ENCODE measurements at regions of chr17 and their contacts with region 1.

Region 1: GRCh38 chr17:76121932-76122430 is 18.4 kb upstream of the EXOC7 start:
- DNase-seq: peak in 3 of 14 experiments; percentile 21 to 49 (median 41)
- ATAC-seq: peak; percentile 12
- H3K4me3 ChIP-seq: peak overlapping the region; percentile 52
- H3K4me3 Mint-ChIP-seq: no peak overlapping the region
- H3K27ac ChIP-seq: no peak overlapping the region
- H3K27ac Mint-ChIP-seq: peak overlapping the region; percentile 42
- H3K4me1 ChIP-seq: peaks cover 31% of the 10 kb centered on the region
- H3K4me1 Mint-ChIP-seq: peaks cover 17% of the 10 kb centered on the region
- H3K27me3 ChIP-seq: no peaks in the 10 kb centered on the region
- H3K27me3 Mint-ChIP-seq: no peaks in the 10 kb centered on the region
- CTCF ChIP-seq: no peak

Region 2: GRCh38 chr17:76111956-76112355 is 10.0 kb before region 1 on chr17:
- CTCF ChIA-PET with region 1: no interaction called
- POLR2A ChIA-PET with region 1: no interaction called
- intact Hi-C with region 1: no loop called
- DNase-seq: no peak
- ATAC-seq: no peak
- H3K4me3 ChIP-seq: no peak overlapping the region
- H3K4me3 Mint-ChIP-seq: no peak overlapping the region
- H3K27ac ChIP-seq: no peak overlapping the region
- H3K27ac Mint-ChIP-seq: no peak overlapping the region
- H3K4me1 ChIP-seq: no peaks in the 10 kb centered on the region
- H3K4me1 Mint-ChIP-seq: no peaks in the 10 kb centered on the region
- H3K27me3 ChIP-seq: no peaks in the 10 kb centered on the region
- H3K27me3 Mint-ChIP-seq: no peaks in the 10 kb centered on the region
- CTCF ChIP-seq: no peak

Region 3: DNA sequence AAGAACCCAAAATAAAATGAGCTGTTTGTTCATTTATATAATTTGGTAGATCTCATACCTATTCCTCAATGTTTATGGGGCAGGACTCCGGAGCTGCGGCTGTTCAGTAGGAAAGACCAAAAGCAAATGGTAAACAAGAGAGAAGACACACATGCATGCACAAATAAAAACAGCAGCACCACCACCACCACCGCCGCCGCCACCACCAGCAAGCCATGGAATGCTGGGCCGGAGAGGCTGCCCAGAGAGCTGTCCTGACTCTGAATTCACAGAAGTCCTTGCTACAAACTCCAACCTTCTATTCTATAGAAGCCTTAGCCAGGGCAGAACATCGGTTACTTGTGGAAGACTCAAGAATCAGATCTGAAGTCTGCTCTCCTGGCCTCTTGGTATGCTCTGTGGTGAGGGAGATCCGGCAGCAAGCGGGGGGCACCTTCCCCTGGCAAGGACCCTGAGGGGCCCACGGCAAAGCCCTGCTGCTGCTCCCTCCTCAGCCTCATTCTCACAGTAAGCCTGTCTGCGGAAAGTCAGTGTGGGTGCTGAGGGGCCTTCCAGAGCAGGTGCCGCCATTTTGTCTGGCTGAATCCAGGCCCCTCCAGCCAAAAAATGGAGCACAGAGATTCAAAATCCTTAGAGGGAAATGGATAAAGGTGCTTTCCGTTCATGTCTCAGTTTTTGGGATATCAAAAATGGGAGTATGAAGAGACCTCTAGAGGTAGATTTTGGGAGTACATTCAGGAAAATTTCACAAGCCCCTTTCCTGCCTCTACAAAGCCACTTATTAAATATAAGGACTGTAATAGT is 25.4 kb after region 1 on chr17:
- CTCF ChIA-PET with region 1: interaction called, 9 read pairs
- POLR2A ChIA-PET with region 1: interaction called, 11 read pairs
- intact Hi-C with region 1: no loop called
- DNase-seq: no peak
- ATAC-seq: no peak
- H3K4me3 ChIP-seq: no peak overlapping the region
- H3K4me3 Mint-ChIP-seq: no peak overlapping the region
- H3K27ac ChIP-seq: peak overlapping the region in 1 of 2 donors; percentile 84
- H3K27ac Mint-ChIP-seq: peak overlapping the region; percentile 97
- H3K4me1 ChIP-seq: peaks cover 70% of the 10 kb centered on the region
- H3K4me1 Mint-ChIP-seq: peaks cover 81% of the 10 kb centered on the region
- H3K27me3 ChIP-seq: no peaks in the 10 kb centered on the region
- H3K27me3 Mint-ChIP-seq: no peaks in the 10 kb centered on the region
- CTCF ChIP-seq: no peak

Region 4: DNA sequence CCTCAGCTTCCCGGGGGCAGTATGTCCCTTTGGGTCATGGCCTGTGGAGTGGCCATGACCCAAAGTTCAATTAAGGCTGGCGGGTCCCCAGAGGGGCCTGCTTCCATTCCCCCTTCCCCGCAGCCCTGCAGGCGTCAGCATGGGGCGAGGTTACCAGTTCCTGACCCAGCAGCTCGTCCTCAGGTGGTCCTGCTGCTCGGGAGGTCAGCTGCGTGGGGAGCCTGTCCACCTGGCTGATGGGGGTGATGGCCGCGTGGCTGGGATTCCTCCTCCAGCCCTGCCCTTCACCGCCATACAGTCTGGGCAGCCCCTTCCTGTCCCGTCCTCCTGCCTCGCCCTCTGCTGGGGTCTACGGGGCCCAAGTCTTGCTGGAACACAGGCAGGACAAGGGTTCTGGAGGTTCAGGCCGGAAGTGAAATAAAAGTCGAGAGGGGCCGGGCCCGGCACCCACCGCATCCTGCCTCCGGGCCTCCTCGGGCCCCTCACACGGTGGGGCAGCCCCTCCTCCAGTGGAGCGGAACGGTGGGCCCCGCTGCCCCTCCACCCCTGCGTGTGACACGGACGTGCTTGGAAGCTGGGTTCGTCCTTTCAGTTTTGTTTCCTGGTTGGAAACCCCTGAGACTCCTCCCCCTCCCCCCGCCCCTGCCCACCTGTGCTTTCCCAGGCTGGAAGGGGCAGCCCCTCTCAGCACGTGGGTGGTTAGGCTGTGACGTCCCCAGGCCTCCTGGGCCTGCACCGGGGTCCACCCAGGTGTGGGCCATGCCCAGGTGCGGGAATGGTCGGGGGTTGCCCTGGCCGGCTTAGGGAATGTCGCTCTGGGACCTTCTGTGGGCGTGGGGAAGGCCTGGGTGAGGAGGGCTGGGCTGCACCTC is 149.9 kb after region 1 on chr17:
- CTCF ChIA-PET with region 1: interaction called, 29 read pairs
- POLR2A ChIA-PET with region 1: interaction called, 9 read pairs
- intact Hi-C with region 1: no loop called
- DNase-seq: peak in 11 of 14 experiments; percentile 23 to 89 (median 55)
- ATAC-seq: peak; percentile 25
- H3K4me3 ChIP-seq: peak overlapping the region; percentile 57
- H3K4me3 Mint-ChIP-seq: peak overlapping the region; percentile 82
- H3K27ac ChIP-seq: peak overlapping the region; percentile 82 to 86
- H3K27ac Mint-ChIP-seq: peak overlapping the region; percentile 98
- H3K4me1 ChIP-seq: peaks cover 92% of the 10 kb centered on the region
- H3K4me1 Mint-ChIP-seq: peaks cover 66% of the 10 kb centered on the region
- H3K27me3 ChIP-seq: no peaks in the 10 kb centered on the region
- H3K27me3 Mint-ChIP-seq: no peaks in the 10 kb centered on the region
- CTCF ChIP-seq: no peak

Region 5: DNA sequence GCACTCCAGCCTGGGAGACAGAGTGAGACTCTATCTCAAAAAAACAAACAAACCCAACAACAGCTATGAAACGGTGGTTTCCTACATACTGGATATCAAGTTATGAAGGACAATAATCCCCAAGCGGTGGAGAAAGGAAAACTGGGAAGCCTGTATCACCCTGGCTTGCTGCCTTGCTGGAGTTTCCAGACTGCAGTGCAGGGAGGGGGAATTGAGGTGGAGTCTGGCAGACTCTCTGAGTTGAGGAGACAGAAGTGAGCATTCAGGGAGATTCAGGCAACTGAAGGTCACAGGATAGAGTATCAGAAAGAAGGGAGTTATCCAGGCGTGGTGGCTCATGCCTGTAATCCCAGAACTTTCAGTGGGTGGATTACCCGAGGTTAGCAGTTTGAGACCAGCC is 174.2 kb after region 1 on chr17:
- CTCF ChIA-PET with region 1: interaction called, 17 read pairs
- POLR2A ChIA-PET with region 1: no interaction called
- intact Hi-C with region 1: loop called (anchors 2 to 5 kb)
- DNase-seq: no peak
- ATAC-seq: no peak
- H3K4me3 ChIP-seq: no peak overlapping the region
- H3K4me3 Mint-ChIP-seq: no peak overlapping the region
- H3K27ac ChIP-seq: no peak overlapping the region
- H3K27ac Mint-ChIP-seq: no peak overlapping the region
- H3K4me1 ChIP-seq: peaks cover 2% of the 10 kb centered on the region
- H3K4me1 Mint-ChIP-seq: peaks cover 4% of the 10 kb centered on the region
- H3K27me3 ChIP-seq: no peaks in the 10 kb centered on the region
- H3K27me3 Mint-ChIP-seq: no peaks in the 10 kb centered on the region
- CTCF ChIP-seq: no peak

Measured in CD4-positive, alpha-beta T cell (primary cell).